Left colon (tissue), 2 donors: ENCODE measurements at regions of chr2 and their contacts with region 1.

Region 1: DNA sequence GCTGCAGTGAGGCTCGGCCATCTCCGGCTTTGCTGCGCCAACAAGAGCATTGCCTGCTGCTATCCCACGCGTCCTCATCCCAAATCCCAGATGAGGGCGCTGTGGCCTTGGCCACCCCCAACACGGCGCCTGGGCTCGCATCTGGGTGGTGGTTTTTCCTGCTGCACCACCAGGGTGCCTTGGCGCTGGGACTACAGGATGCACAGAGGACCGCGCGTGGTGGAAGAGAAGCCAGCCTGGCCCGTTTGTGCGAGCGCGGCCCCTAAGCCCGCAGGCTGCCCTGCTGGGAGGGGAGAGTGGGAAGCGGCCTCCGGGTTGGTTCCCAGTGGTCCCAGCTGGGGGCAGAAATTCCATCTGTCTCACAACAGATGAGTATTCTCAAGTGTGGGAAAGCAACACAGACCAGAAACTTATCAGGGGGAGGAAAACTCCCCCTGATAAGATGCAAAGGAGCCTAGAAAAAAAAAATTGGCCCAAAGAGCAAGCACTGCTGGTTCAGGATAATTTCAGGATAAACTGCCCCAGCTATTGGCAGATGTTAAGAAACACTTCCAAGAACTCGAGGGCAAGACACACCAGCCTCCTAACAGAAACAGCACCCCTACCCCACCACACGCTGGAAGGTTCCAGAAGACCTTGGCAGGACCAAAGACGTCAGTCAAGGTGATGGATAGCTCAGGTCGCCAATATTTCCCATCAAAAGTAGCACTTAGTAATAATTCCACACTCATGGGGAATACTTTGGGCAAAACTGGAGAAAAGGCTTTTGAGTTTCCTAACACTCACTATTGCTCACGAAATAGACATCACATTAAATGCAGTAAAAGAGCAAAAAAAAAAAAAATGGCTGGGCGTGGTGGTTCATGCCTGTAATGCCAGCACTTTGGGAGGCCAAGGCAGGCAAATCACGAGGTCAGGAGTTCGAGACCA is 152.1 kb downstream of the PXDN start:
- DNase-seq: peak; percentile 71 to 81
- ATAC-seq: peak; percentile 99

Region 2: DNA sequence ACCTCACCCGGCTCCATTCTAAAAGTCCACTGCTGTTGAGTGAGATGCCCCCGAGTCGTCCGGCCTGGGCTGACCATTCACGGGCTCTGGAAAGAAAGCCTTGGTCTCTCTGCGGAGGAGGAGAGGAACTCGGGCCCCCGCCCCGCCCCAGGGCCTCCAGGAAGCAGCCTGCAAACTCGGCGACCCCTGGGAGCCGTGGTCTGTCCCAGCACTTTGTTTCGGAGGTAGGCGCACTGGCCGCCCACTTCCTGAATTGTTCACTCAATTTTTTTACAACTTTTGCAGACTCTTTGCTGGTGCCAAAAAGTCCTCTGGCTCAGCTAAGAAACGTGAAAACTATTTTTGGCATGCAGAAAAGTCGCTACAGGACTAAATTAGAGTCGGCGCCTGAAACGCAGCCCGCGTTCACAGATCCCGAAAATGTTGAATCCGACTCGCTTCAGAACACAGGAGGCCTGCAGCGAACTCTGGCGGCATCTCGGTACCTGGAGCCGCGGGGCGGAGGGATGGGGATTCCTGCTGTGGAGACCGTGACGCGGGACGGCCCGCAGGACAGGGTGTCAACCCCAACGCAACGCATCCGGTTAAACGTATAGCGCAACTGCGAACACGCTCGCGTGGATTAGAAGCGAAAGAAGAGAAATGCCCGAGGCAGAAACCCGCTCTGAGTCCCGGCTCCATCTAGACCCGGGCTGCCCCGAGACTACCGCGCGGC is 150.6 kb after region 1 on chr2:
- intact Hi-C with region 1: loop called in 1 of 2 experiments (anchors 10 kb)
- DNase-seq: peak; percentile 59 to 73
- ATAC-seq: peak; percentile 69

Region 3: GRCh38 chr2:1750933-1751766 is 158.9 kb after region 1 on chr2:
- intact Hi-C with region 1: loop called (anchors 10 kb)
- DNase-seq: peak; percentile 54 to 64
- ATAC-seq: peak; percentile 85